ENCODE measurements at regions of chr4 and their contacts with region 1.

Region 1: DNA sequence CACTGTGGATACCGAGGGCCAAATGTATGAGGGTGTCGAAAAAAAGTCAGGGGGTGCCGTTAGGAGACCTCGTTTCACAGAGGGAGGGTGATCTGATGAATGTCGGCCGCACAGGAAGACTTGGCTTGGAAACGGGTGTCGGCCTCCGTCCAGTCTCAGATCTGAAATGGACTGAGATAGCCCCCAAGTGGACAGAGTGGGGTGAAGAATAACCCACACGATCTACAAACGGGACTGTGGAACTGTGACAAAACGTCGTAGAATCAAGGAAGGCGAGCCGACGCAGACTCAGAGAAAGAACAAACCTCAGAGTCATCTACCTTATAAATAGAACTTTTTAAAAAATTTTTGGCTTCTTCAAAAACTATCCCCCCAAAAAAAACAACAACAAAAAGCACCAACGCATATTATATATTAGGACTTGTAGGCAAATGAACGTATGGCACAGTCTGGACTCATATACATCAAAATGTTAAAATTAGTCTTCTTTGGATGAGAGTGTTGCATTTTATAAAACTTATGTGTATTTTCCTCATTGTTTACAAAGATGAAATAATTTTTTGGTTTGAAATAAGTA is 63.8 kb upstream of the IRF2 start:
- DNase-seq: peak; percentile 83
- ATAC-seq: peak; percentile 87
- H3K4me3 ChIP-seq: peak overlapping the region; percentile 88
- H3K27ac ChIP-seq: peak overlapping the region; percentile 86
- H3K4me1 ChIP-seq: peaks cover 23% of the 10 kb centered on the region
- H3K27me3 ChIP-seq: no peaks in the 10 kb centered on the region
- CTCF ChIP-seq: peak; percentile 61 to 79 (median 69)
- EP300 ChIP-seq: no peak
- POLR2A ChIP-seq: no peak
- RAD21 ChIP-seq: peak; percentile 96

Region 2: GRCh38 chr4:184310171-184310567 is 227.9 kb before region 1 on chr4:
- CTCF ChIA-PET with region 1: interaction called, 21 read pairs
- POLR2A ChIA-PET with region 1: interaction called, 49 read pairs
- RAD21 ChIA-PET with region 1: interaction called, 57 read pairs
- SMC1A ChIA-PET with region 1: interaction called, 32 read pairs
- in situ Hi-C with region 1: no loop called
- intact Hi-C with region 1: loop called (anchors 1 kb)
- DNase-seq: no peak
- ATAC-seq: peak; percentile 61
- H3K4me3 ChIP-seq: peak overlapping the region; percentile 75; the same call in 1 of the 2 replicates
- H3K27ac ChIP-seq: peak overlapping the region; percentile 94
- H3K4me1 ChIP-seq: peaks cover 47% of the 10 kb centered on the region
- H3K27me3 ChIP-seq: no peaks in the 10 kb centered on the region
- CTCF ChIP-seq: peak; percentile 49 to 59 (median 49)
- EP300 ChIP-seq: no peak
- POLR2A ChIP-seq: peak; percentile 33; the same call in 1 of the 2 replicates
- RAD21 ChIP-seq: peak; percentile 65

Region 3: DNA sequence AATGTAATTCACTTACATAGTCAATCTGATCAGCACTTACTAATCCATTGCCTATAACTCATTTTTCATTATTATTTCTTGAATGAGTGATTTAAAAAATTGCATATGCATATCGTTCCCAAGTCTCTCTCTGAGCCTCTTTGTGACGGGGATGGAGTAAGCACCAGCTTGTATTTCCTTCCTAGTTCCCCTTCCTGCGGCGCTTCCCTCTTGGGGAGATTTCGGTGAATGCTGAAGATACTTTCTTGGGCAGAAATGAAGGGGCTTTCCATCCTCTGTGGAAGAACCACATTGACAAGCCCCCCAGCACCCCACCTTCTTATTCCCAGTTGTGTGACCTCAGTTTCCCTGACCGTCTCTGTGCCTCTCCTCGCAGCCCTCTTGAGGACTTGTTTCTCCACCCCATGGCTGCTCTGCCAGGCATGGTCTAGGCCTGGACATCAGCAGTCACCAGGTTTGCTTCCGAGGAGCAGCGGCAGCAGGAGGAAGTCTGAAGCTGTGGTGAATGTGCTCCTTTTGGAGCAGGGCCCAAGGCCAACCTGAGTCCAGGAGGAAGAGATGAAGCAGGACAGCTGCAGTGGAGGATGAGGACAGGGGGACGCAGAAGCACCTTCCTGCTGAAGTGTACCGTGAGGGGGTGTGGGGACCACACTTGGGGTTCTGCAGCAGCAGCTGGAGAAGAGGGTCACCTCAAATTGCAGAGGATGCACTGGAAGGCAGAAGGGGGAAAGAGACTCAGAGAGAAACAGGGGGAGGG is 188.7 kb before region 1 on chr4:
- CTCF ChIA-PET with region 1: interaction called, 54 read pairs
- POLR2A ChIA-PET with region 1: interaction called, 58 read pairs
- RAD21 ChIA-PET with region 1: interaction called, 151 read pairs
- SMC1A ChIA-PET with region 1: interaction called, 138 read pairs
- in situ Hi-C with region 1: loop called (anchors 5 kb)
- intact Hi-C with region 1: loop called (anchors 1 kb)
- DNase-seq: no peak
- ATAC-seq: no peak
- H3K4me3 ChIP-seq: peak overlapping the region; percentile 89
- H3K27ac ChIP-seq: peak overlapping the region; percentile 99
- H3K4me1 ChIP-seq: peaks cover 50% of the 10 kb centered on the region
- H3K27me3 ChIP-seq: no peaks in the 10 kb centered on the region
- CTCF ChIP-seq: no peak
- EP300 ChIP-seq: no peak
- POLR2A ChIP-seq: no peak
- RAD21 ChIP-seq: no peak

Region 4: GRCh38 chr4:184395971-184396391 is 142.1 kb before region 1 on chr4:
- CTCF ChIA-PET with region 1: no interaction called
- POLR2A ChIA-PET with region 1: no interaction called
- RAD21 ChIA-PET with region 1: interaction called, 3 read pairs
- SMC1A ChIA-PET with region 1: interaction called, 7 read pairs
- in situ Hi-C with region 1: no loop called
- intact Hi-C with region 1: loop called (anchors 5 kb)
- DNase-seq: peak; percentile 81
- ATAC-seq: peak; percentile 89
- H3K4me3 ChIP-seq: peak overlapping the region; percentile 29
- H3K27ac ChIP-seq: peak overlapping the region; percentile 76
- H3K4me1 ChIP-seq: peaks cover 29% of the 10 kb centered on the region
- H3K27me3 ChIP-seq: no peaks in the 10 kb centered on the region
- CTCF ChIP-seq: no peak
- EP300 ChIP-seq: no peak
- POLR2A ChIP-seq: peak; percentile 63; the same call in 1 of the 2 replicates
- RAD21 ChIP-seq: no peak

Region 5: DNA sequence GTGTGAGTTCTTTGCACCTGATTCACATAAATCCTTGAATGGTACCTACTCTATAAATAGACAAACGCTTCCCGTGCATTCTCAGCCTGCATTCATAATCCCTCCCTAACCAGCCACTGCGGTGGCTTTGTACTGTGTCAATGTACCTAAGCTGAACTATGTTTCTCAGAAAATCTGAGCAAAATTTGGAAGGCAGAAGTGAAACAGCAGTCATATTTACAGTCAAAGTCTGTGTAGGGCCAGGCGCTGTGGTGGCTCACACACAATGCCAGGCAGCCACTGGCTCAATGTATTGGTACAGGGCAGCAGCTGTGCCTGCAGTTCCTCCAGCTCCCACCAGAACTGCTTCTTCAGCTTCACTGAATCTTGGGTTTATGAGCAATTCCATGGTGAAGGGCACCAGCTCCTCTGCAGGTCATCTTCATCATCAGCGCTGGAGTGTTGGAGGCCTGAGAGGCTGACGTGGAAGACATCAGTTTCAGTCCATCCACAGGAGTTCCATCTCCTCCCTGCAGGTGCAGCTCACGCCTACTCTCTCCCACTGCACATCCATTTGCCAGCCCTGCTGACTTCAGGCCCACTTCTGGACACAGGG is 31.5 kb before region 1 on chr4:
- CTCF ChIA-PET with region 1: no interaction called
- POLR2A ChIA-PET with region 1: interaction called, 3 read pairs
- RAD21 ChIA-PET with region 1: interaction called, 5 read pairs
- SMC1A ChIA-PET with region 1: interaction called, 117 read pairs
- in situ Hi-C with region 1: no loop called
- intact Hi-C with region 1: no loop called
- DNase-seq: peak; percentile 78
- ATAC-seq: peak; percentile 100
- H3K4me3 ChIP-seq: no peak overlapping the region
- H3K27ac ChIP-seq: peak overlapping the region; percentile 60
- H3K4me1 ChIP-seq: peaks cover 30% of the 10 kb centered on the region
- H3K27me3 ChIP-seq: no peaks in the 10 kb centered on the region
- CTCF ChIP-seq: peak in 2 of 3 experiments; percentile 47 to 61; a peak in 3 of 6 replicates
- EP300 ChIP-seq: peak in 1 of 2 experiments; percentile 27; a peak in 1 of 4 replicates
- POLR2A ChIP-seq: 0 out of 2 replicates have a peak, but pooled peaks have one; percentile 44
- RAD21 ChIP-seq: 0 out of 2 replicates have a peak, but pooled peaks have one; percentile 9

Region 6: DNA sequence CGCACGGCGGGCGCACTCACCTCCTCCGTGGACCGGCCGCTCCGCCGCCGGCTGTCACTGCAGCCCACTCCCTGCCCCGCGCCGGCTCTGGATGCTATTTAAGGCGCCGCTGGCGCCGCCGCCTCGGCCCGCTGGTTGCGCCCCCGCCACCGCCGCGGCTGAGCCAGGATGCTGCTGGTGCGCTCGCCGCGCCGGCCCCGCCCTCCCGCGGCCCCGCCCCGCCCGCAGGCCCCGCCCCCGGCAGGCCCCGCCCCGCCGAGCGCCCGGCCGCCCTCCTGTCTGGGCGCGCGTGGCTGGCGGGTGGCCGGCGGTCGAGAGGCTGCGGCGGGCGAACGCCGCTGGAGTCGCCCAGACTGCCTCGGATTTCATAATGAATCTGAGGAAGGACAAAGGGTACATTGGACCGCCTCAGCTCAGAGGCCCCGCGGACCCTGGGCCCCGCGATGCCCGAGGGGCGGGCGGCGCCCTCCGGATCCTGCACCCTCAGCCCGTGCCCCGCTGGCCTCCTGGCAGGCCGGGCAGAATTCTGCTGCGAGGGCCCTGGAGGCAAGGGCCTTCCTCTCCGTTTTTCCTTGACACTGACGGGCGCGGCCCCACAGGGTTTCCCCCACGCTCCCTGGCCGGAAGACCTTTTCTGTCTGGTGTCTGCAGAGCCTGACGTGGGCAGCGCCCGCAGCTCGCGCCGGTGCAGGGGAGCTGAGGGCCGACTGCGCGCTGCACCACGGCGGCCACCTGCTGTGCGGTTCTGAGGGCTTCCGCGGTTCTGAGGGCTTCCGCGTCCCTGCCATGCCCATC is 288.0 kb after region 1 on chr4 and contains the start of gene ACSL1:
- CTCF ChIA-PET with region 1: no interaction called
- POLR2A ChIA-PET with region 1: no interaction called
- RAD21 ChIA-PET with region 1: no interaction called
- SMC1A ChIA-PET with region 1: no interaction called
- in situ Hi-C with region 1: no loop called
- intact Hi-C with region 1: loop called (anchors 5 kb)
- DNase-seq: no peak
- ATAC-seq: peak; percentile 70
- H3K4me3 ChIP-seq: peak within 1 kb of the TSS; percentile 77
- H3K27ac ChIP-seq: peak within 1 kb of the TSS; percentile 90
- H3K4me1 ChIP-seq: peaks cover 22% of the 10 kb centered on the region
- H3K27me3 ChIP-seq: no peaks in the 10 kb centered on the region
- CTCF ChIP-seq: 0 out of 6 replicates have a peak, but pooled peaks of 1 of the 3 experiments have one; percentile 4
- EP300 ChIP-seq: no peak
- POLR2A ChIP-seq: peak; percentile 88
- RAD21 ChIP-seq: no peak
- polyA plus RNA-seq, gene ACSL1: 30.7 to 32.6 TPM